Common myeloid progenitor, CD34-positive (primary cell): ENCODE measurements at regions of chr20 and their contacts with region 1.

Region 1: GRCh38 chr20:4154958-4155411 is 139.6 kb upstream of the RNF24 start:
- DNase-seq: peak; percentile 99 to 100 (median 100)
- H3K4me3 ChIP-seq: peak overlapping the region in 2 of 7 experiments; percentile 56 to 60
- H3K27ac ChIP-seq: no peak overlapping the region
- H3K4me1 ChIP-seq: peaks cover 5 to 64% (median 59%) of the 10 kb centered on the region in 4 experiments
- H3K27me3 ChIP-seq: peaks cover 0 to under 1% (median 0%) of the 10 kb centered on the region in 5 experiments

Region 2: DNA sequence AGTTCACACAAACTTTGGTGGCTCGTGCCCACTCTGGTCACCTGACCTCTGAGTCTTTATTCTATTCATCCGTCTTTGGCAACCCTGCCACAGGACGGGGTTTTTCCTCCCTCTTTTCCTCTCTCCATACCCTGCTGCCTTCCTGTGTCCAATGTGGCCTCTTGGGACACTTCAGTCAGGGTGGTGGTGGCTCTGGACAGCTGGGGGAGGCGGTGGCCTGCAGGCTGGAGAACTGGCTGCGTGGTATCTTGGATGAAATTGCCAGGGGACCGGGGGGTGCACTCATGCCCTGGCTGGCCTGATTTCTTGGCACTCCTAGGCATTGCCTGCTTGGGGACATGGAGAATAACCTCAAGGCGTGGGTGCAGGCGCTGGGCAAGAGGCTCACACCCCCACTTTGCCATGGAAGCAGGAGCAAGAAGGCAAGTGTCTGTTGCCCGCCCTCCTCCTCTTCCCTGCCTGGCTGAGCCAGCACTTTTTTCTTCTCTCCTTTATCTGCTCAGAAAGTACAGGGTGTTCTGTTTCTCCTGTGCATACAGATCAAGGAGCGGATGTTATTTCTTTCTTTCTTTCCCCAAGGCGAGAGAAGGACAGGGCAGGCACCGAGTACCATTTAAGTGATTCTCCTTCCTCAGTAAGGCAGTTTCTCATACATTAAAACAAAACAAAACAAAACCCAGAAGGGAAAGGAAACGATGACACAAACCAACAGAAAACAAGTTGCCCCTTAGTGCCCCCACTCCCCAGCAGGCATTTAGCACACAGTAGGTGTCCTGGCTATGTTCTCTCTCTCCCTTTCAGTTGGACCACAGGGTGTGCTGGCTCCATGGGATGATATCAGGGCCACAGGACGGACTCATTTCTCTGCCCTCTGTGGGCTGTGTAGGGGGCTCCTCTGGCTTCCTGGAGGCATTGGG is 15.9 kb after region 1 on chr20:
- CTCF ChIA-PET with region 1: interaction called, 3 read pairs
- POLR2A ChIA-PET with region 1: interaction called, 11 read pairs
- DNase-seq: peak in 1 of 3 donors; percentile 48
- H3K4me3 ChIP-seq: peak overlapping the region in 2 of 7 experiments; percentile 74 to 82
- H3K27ac ChIP-seq: peak overlapping the region in 1 of 2 experiments; percentile 65
- H3K4me1 ChIP-seq: peaks cover 0 to 60% (median 49%) of the 10 kb centered on the region in 4 experiments
- H3K27me3 ChIP-seq: no peaks in the 10 kb centered on the region

Region 3: GRCh38 chr20:4181956-4182945 is 27.3 kb after region 1 on chr20:
- CTCF ChIA-PET with region 1: interaction called, 13 read pairs
- POLR2A ChIA-PET with region 1: interaction called, 3 read pairs
- DNase-seq: no peak
- H3K4me3 ChIP-seq: no peak overlapping the region
- H3K27ac ChIP-seq: no peak overlapping the region
- H3K4me1 ChIP-seq: no peaks in the 10 kb centered on the region
- H3K27me3 ChIP-seq: no peaks in the 10 kb centered on the region

Region 4: DNA sequence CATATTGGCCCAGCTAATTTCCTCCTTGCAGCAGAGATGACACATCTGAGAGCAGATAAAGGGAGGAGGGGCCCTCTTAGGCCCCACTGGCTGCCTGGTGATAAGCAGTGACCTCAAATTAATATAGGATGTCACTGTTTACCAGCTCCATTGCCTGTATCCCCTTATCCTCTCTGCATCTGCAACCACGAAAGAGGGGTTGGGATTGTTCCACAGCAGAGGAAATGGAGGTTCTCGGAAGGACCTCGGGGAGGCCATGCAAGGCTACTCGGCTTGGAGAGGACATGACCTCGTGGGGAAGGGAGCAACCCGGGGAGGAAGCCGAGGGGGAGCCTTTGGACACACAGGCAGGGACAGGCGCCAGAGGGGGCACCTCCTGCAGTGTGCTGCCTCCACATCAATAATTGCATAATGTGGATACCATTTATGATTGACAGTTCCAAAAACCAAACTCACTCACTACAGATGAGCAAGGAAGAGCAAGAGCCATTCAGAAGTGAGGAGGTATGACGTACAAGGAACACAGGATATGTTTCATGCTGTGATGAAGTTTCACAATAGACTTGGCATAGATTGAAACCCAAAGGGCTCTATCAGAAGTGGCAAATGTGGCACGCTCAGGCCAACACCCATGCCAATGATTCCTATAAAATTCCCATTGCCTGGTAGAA is 37.5 kb after region 1 on chr20:
- CTCF ChIA-PET with region 1: interaction called, 10 read pairs
- POLR2A ChIA-PET with region 1: interaction called, 3 read pairs
- DNase-seq: peak; percentile 51 to 85 (median 74)
- H3K4me3 ChIP-seq: no peak overlapping the region
- H3K27ac ChIP-seq: peak overlapping the region in 1 of 2 experiments; percentile 25
- H3K4me1 ChIP-seq: peaks cover 0 to 10% (median 5%) of the 10 kb centered on the region in 4 experiments
- H3K27me3 ChIP-seq: no peaks in the 10 kb centered on the region